ENCODE measurements at regions of chr10 and their contacts with region 1.

Region 1: DNA sequence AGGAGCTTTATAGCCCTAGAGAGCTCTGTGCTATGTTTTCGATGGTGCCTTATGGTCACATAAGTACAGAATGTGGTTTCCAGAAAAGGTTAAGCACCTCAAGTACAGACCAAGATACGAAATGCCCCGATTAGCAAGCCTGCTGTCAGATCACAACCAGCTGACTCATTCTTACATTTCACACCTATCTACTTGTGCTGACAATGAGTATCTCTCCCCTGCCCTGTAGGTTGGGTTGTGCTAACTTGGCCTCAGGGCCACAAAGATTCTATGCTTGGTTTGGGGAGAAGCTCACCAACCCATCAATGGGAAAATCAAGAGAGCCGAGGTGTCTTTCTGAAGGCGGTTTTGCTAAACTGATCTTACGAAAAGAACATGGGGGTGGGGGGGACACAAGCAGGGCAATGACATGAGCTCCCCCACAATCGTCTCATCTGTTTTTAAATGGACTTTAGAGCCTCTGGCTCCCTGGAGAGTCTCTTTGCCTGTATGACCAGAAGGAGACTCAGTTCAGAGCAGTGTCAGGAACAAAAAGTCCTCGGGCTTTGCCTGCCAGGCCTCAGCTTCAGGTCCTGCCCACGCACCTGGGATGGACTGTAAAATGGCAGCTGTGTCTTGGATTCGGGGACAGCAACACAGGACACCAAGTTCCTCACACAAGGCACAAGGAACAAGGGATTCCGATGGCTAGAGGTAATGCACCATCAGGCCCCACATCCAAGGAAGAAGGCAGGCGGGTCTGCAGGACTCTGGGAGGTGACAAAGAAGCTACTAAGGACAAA is 55.1 kb downstream of the FAM53B start:
- DNase-seq: no peak
- ATAC-seq: no peak
- H3K4me3 ChIP-seq: no peak overlapping the region
- H3K27ac ChIP-seq: no peak overlapping the region
- H3K4me1 ChIP-seq: no peaks in the 10 kb centered on the region
- CTCF ChIP-seq: no peak
- EP300 ChIP-seq: no peak
- POLR2A ChIP-seq: no peak
- RAD21 ChIP-seq: no peak

Region 2: DNA sequence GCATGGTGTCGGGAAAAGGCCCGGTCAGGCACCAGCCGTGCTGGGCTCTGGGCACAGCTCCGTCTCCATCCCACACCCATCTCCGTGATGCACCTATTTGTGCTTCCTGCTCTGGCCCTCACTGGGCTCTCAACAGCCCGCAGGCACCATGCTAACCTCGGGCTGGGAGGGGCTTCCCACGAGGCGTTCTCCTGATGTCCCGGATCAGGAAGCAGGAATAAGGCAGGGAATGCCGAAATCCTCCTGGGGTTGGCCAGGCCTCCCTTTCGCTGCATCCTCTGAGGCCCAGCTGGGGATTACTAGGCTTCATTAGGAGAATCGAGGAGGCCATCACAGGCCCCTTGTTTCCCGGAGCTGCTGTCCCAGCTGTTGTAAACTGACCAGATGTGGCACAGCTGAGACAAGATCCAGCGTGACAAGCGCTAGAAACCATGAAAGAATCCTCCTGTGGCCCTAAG is 16.9 kb before region 1 on chr10:
- CTCF ChIA-PET with region 1: interaction called, 13 read pairs
- POLR2A ChIA-PET with region 1: no interaction called
- DNase-seq: no peak
- ATAC-seq: no peak
- H3K4me3 ChIP-seq: no peak overlapping the region
- H3K27ac ChIP-seq: no peak overlapping the region
- H3K4me1 ChIP-seq: no peaks in the 10 kb centered on the region
- CTCF ChIP-seq: no peak
- EP300 ChIP-seq: no peak
- POLR2A ChIP-seq: no peak
- RAD21 ChIP-seq: no peak

Region 3: GRCh38 chr10:124802313-124802675 is 113.2 kb after region 1 on chr10:
- CTCF ChIA-PET with region 1: no interaction called
- POLR2A ChIA-PET with region 1: no interaction called
- DNase-seq: peak in 1 of 2 experiments; percentile 6
- ATAC-seq: peak; percentile 15 to 21; a peak in 3 of 6 replicates
- H3K4me3 ChIP-seq: peak overlapping the region; percentile 96
- H3K27ac ChIP-seq: peak overlapping the region; percentile 90 to 98
- H3K4me1 ChIP-seq: peaks cover 11% of the 10 kb centered on the region; the same call in 2 of the 3 replicates
- CTCF ChIP-seq: no peak
- EP300 ChIP-seq: no peak
- POLR2A ChIP-seq: no peak
- RAD21 ChIP-seq: no peak

Measured in A549 (cell line).